Activated CD4-positive, alpha-beta memory T cell treated with anti-CD3 and anti-CD28 coated beads, Interleukin-2, amount 10 ng/mL, durations not matched to agents 7 days and 5 days (primary cell): ENCODE measurements at regions of chr20 and their contacts with region 1.

Region 1: GRCh38 chr20:57432874-57433491 is 41.8 kb downstream of the RBM38 start:
- DNase-seq: peak; percentile 88
- H3K4me3 Mint-ChIP-seq: peak overlapping the region; percentile 50
- H3K27ac Mint-ChIP-seq: peak overlapping the region; percentile 88
- H3K4me1 Mint-ChIP-seq: peaks cover 66% of the 10 kb centered on the region
- H3K27me3 Mint-ChIP-seq: no peaks in the 10 kb centered on the region

Region 2: GRCh38 chr20:57167971-57168706 is 264.8 kb before region 1 on chr20:
- CTCF ChIA-PET with region 1: no interaction called
- POLR2A ChIA-PET with region 1: no interaction called
- DNase-seq: no peak
- H3K4me3 Mint-ChIP-seq: no peak overlapping the region
- H3K27ac Mint-ChIP-seq: no peak overlapping the region
- H3K4me1 Mint-ChIP-seq: no peaks in the 10 kb centered on the region
- H3K27me3 Mint-ChIP-seq: no peaks in the 10 kb centered on the region

Region 3: GRCh38 chr20:57383447-57384347 is 49.3 kb before region 1 on chr20:
- CTCF ChIA-PET with region 1: interaction called, 40 read pairs
- POLR2A ChIA-PET with region 1: interaction called, 157 read pairs
- DNase-seq: no peak
- H3K4me3 Mint-ChIP-seq: no peak overlapping the region
- H3K27ac Mint-ChIP-seq: no peak overlapping the region
- H3K4me1 Mint-ChIP-seq: peaks cover 42% of the 10 kb centered on the region
- H3K27me3 Mint-ChIP-seq: no peaks in the 10 kb centered on the region

Region 4: DNA sequence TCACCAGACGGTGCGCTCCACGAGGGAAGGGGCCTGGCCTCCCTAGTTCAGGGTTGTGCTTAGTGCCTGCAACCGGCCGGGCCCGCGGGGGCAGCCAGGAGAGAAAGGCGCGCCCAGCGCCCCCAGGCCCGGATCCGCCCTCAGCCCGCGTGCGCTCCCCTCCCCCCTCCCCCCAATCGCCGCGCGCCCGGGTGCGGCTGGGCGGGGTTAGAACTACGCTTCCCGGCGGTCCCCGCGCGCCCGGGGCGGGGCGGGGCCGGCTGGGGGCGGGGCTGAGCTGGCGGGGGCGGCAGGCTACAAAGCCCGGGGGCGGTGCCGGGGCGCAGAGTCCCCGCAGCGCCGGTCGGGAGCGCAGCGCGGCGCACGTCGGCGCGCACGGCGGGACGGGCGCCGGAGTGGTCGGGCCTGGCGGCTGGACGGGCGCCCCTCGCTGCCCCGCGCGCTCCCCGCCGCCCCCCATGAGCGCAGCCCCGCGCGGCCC is 41.9 kb before region 1 on chr20 and contains the start of gene RBM38:
- CTCF ChIA-PET with region 1: interaction called, 40 read pairs
- POLR2A ChIA-PET with region 1: interaction called, 157 read pairs
- DNase-seq: peak; percentile 83
- H3K4me3 Mint-ChIP-seq: peak within 1 kb of the TSS; percentile 98
- H3K27ac Mint-ChIP-seq: peak within 1 kb of the TSS; percentile 96
- H3K4me1 Mint-ChIP-seq: peaks cover 51% of the 10 kb centered on the region
- H3K27me3 Mint-ChIP-seq: no peaks in the 10 kb centered on the region
- total RNA-seq, gene RBM38: 116 to 119 TPM

Region 5: GRCh38 chr20:57398231-57398821 is 34.7 kb before region 1 on chr20:
- CTCF ChIA-PET with region 1: interaction called, 40 read pairs
- POLR2A ChIA-PET with region 1: interaction called, 157 read pairs
- DNase-seq: peak; percentile 87
- H3K4me3 Mint-ChIP-seq: peak overlapping the region; percentile 78
- H3K27ac Mint-ChIP-seq: peak overlapping the region; percentile 97
- H3K4me1 Mint-ChIP-seq: peaks cover 91% of the 10 kb centered on the region
- H3K27me3 Mint-ChIP-seq: no peaks in the 10 kb centered on the region

Region 6: GRCh38 chr20:57409672-57410397 is 23.1 kb before region 1 on chr20:
- CTCF ChIA-PET with region 1: interaction called, 8 read pairs
- POLR2A ChIA-PET with region 1: interaction called, 21 read pairs
- DNase-seq: no peak
- H3K4me3 Mint-ChIP-seq: no peak overlapping the region
- H3K27ac Mint-ChIP-seq: no peak overlapping the region
- H3K4me1 Mint-ChIP-seq: peaks cover 20% of the 10 kb centered on the region
- H3K27me3 Mint-ChIP-seq: no peaks in the 10 kb centered on the region

Region 7: DNA sequence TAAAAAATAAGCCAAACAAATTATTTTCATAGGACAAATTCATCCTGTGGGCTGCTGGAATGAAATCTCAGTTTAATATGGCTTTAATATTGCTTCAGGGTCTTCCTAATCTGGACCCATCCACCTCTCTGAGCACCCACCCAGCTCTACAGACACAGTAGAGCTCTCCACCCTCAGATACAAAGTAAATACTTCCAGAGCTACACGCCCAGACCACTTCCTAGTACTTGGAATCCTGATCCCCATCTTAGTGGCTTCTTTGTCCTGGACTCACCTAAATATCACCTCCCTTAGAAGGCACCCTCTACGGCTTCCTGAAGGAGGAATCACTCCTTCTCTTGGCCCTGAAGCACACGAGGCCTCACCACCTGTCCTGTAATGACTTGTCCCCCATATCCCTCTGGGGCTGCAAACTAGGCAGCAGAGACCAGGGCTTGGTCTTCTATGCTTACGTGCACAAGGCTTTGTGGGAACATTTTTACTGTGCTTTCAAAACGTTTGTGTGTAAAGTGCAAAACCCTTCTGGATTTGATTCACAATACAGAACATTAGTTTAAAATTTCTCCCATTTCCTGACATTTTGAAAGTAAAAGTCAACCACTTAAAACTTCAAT is 89.5 kb after region 1 on chr20:
- CTCF ChIA-PET with region 1: no interaction called
- POLR2A ChIA-PET with region 1: no interaction called
- DNase-seq: no peak
- H3K4me3 Mint-ChIP-seq: no peak overlapping the region
- H3K27ac Mint-ChIP-seq: peak overlapping the region; percentile 2
- H3K4me1 Mint-ChIP-seq: peaks cover 21% of the 10 kb centered on the region
- H3K27me3 Mint-ChIP-seq: peaks cover 2% of the 10 kb centered on the region